A673 (cell line): ENCODE measurements at regions of chr2 and their contacts with region 1.

Region 1: GRCh38 chr2:46804794-46805193 is 110.8 kb downstream of the MCFD2 start:
- DNase-seq: no peak
- H3K4me3 ChIP-seq: no peak overlapping the region
- H3K27ac ChIP-seq: no peak overlapping the region
- H3K4me1 ChIP-seq: peaks cover 5% of the 10 kb centered on the region
- H3K27me3 ChIP-seq: no peaks in the 10 kb centered on the region
- CTCF ChIP-seq: no peak

Region 2: GRCh38 chr2:46829921-46830245 is 25.1 kb after region 1 on chr2:
- CTCF ChIA-PET with region 1: no interaction called
- POLR2A ChIA-PET with region 1: interaction called, 15 read pairs
- intact Hi-C with region 1: no loop called
- DNase-seq: no peak
- H3K4me3 ChIP-seq: no peak overlapping the region
- H3K27ac ChIP-seq: no peak overlapping the region
- H3K4me1 ChIP-seq: no peaks in the 10 kb centered on the region
- H3K27me3 ChIP-seq: no peaks in the 10 kb centered on the region
- CTCF ChIP-seq: no peak